Activated CD8-positive, alpha-beta memory T cell treated with anti-CD3 and anti-CD28 coated beads, Interleukin-2, amount 10 ng/mL, durations not matched to agents 7 days and 5 days (primary cell): ENCODE measurements at regions of chr11 and their contacts with region 1.

Region 1: DNA sequence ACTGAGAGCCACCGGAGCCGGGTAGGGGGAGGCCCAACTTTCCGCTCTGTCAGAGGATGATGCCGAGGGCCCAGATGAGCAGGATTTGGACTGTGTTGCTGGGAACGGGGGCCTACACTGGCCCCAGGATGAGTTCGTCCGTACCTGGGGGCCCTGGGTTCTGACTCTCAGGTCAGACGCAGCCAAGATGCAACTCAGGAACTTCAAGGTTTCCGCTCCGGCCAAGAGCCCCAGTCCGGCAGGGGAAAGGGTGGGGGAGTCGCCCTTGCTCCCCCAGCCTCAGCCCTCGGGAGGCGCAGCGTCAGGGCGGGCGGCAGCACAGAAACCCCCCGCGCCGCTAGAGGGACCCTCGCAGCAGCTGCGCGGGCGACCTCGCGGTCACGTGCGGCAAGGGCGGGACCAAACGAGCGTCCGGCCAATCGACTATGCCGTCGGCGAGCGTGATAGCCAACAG is 241 bp upstream of the ARL2 start:
- DNase-seq: peak; percentile 91
- ATAC-seq: peak; percentile 85
- H3K4me3 Mint-ChIP-seq: peak overlapping the region; percentile 84
- H3K27ac Mint-ChIP-seq: peak overlapping the region; percentile 97
- H3K4me1 Mint-ChIP-seq: peaks cover 28% of the 10 kb centered on the region
- H3K27me3 Mint-ChIP-seq: no peaks in the 10 kb centered on the region

Region 2: DNA sequence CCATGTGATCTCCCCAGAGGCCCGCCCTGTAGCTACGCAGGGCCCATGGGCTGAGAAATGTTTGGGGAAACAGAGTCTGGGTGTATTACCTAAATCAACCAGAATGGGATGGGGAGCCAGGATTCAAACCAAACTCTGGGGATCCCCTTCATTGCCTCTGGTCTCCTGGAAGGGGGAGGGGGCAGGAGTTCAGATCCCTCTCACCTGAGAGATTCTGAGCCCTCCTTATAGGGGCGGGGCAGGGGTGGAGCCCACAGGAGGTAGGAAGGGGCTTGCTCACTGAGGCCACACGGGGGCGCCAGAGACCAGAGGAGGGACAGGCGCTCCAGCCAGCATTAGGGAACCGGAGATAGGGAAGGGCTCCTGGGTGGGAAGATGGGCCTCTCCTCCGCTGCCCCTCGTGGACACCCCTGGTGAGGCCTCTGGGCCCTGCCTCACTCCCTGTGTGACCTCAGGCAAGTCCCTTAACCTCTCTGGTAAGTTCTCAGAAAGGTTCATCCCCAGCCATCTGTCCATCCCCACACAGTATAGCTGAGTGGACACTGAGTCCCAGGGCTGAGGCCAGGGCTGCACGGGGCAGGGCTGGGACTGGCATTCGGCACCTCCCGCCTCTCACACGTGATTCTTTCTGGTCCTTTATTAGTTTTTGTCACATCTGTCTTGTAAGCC is 166.6 kb before region 1 on chr11:
- CTCF ChIA-PET with region 1: interaction called, 37 read pairs
- DNase-seq: peak; percentile 94
- ATAC-seq: peak; percentile 73
- H3K4me3 Mint-ChIP-seq: no peak overlapping the region
- H3K27ac Mint-ChIP-seq: no peak overlapping the region
- H3K4me1 Mint-ChIP-seq: peaks cover 57% of the 10 kb centered on the region
- H3K27me3 Mint-ChIP-seq: no peaks in the 10 kb centered on the region

Region 3: DNA sequence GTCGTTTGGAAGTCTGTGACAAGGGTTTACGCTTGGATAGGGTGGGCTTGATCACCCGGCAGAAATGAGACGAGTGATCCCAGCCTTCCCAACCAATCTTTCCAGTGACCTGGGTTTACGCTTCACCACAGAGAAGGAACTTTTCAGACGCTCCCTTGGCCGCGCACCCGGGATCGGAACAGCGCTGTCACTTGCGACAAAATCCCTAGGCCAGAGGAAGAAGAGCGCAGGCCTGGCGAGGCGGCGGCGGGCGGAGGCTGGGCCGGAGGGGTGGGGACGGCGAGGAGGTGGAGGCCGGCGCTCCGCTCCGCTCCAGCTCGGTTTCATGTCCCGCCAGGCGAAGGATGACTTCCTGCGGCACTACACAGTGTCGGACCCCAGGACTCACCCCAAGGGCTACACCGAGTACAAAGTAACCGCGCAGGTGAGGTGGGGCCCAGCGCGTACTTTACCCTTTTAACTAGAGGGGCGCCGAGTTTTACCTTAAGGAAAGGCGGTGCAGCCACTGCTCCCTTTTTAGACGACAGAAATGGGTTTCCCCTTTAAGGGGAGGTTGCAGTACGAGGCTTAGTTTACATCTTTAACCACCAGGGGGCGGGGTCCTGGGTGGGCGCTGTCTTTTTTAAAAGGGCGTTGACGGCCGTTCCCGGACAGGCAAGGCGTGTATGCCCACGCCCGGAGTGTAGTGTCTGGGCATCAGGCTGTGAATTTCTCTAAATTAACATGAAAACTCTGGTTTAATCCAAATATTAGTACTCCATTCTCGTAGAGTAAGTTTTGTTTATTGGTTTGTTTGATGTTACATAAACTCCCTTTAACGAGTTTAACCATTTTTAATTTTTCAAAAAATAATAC is 13.7 kb after region 1 on chr11 and contains the start of gene SNX15:
- CTCF ChIA-PET with region 1: interaction called, 81 read pairs
- DNase-seq: peak; percentile 96
- ATAC-seq: peak; percentile 94
- H3K4me3 Mint-ChIP-seq: peak within 1 kb of the TSS; percentile 69
- H3K27ac Mint-ChIP-seq: peak within 1 kb of the TSS; percentile 86
- H3K4me1 Mint-ChIP-seq: peaks cover 22% of the 10 kb centered on the region
- H3K27me3 Mint-ChIP-seq: no peaks in the 10 kb centered on the region
- total RNA-seq, gene SNX15: 18.9 to 29.2 TPM

Region 4: DNA sequence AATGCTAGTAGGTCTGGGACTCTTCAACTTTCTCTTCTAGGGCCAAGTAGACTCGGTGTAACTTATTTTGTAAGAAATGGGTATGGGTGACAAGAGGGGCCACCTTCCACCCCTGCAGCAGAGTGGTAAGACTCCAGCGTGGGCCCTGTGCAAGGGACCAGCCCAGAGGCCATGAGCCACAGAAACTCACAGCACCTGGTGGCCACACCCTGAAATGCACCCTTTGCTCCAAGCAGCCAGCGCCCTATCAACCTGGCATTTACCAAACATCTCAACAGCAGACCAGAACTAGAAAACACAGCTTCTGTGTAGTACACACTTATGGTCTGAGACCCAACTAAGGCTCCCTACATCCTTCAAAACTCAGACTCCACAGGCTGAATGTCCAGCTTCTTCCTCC is 64.4 kb after region 1 on chr11:
- CTCF ChIA-PET with region 1: interaction called, 25 read pairs
- DNase-seq: peak; percentile 81
- ATAC-seq: peak; percentile 87
- H3K4me3 Mint-ChIP-seq: no peak overlapping the region
- H3K27ac Mint-ChIP-seq: peak overlapping the region; percentile 39
- H3K4me1 Mint-ChIP-seq: peaks cover 62% of the 10 kb centered on the region
- H3K27me3 Mint-ChIP-seq: no peaks in the 10 kb centered on the region

Region 5: GRCh38 chr11:65095974-65096806 is 82.5 kb after region 1 on chr11 and contains the start of gene VPS51:
- CTCF ChIA-PET with region 1: interaction called, 17 read pairs
- DNase-seq: peak; percentile 94
- ATAC-seq: peak; percentile 96
- H3K4me3 Mint-ChIP-seq: peak within 1 kb of the TSS; percentile 94
- H3K27ac Mint-ChIP-seq: peak within 1 kb of the TSS; percentile 96
- H3K4me1 Mint-ChIP-seq: peaks cover 21% of the 10 kb centered on the region
- H3K27me3 Mint-ChIP-seq: no peaks in the 10 kb centered on the region
- total RNA-seq, gene VPS51: 104 to 116 TPM

Region 6: DNA sequence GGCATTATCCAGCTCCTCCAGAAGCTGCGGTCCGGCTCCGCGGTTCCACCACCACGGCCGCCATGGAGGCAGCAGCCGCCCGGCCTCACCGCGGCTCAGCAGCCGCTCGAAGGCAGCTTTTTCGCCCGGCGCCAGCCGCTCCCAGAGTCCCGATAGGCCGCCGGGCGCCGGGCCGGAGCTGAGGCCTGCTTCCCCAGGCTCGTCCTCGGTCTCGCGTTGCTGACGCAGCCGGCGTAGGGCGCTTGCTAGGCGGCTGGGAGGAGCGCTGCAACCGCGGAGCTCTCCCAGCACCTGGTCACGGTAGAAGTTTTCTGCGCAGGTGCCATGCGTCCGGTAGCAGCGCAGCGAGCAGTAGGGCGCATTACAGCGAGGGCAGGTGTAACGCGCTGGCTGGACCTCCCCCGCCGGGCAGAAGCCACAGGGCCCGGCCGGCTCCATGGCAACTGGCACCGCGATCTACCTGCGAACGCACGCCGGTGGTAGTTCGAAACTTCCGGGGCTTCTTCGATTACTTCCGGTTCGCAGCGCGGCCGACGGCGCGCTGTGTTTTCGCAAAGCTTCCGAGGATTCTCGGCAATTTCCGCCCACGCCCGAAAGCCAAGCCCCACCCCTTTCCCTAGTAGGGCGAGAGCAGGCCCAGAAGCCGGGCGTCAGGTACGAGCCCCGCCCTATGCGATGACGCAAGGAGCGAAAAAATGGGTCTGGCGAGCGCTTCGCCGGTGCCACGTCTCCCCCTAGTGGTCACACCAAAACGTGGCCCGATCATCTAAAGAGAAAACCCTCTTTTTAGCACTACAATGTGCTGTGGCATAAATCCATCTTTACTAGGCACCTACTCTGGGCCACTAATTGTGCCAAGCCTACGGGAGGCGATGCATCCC is 103.7 kb after region 1 on chr11 and contains the start of gene ZNHIT2:
- CTCF ChIA-PET with region 1: interaction called, 68 read pairs
- DNase-seq: peak; percentile 100
- ATAC-seq: peak; percentile 71
- H3K4me3 Mint-ChIP-seq: peak within 1 kb of the TSS; percentile 86
- H3K27ac Mint-ChIP-seq: peak within 1 kb of the TSS; percentile 91
- H3K4me1 Mint-ChIP-seq: peaks cover 64% of the 10 kb centered on the region
- H3K27me3 Mint-ChIP-seq: no peaks in the 10 kb centered on the region
- total RNA-seq, gene ZNHIT2: 10.5 to 13.5 TPM